ENCODE measurements at regions of chr10 and their contacts with region 1.

Region 1: DNA sequence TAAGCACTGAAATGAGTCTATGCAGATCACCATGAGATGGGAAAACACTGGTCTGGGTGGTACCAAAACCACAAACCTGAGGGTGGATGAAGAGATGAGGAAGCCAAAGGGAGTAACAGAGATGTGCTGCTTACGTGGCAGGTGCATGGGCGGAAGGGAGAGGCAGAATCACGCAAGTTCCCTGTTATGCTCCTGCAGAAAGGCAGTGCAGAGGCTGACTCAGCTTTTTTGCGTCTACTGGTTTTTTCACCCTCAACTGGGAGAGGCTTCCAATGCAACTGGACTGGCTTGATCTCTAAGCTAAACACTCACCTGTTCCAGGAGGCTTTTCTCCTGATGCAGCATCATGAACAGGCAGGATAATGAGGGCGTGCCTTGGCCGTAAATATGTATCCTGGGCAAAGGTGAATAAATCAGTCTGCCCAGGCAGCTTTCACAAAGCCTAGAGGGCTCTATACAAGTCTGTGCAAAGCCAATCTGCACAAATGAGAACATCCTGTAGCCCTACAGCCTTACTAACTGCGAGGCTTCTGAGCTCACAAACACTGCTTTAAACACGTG is 95.4 kb upstream of the AFAP1L2 start:
- DNase-seq: peak; percentile 95
- H3K4me3 Mint-ChIP-seq: peak overlapping the region; percentile 56
- H3K27ac Mint-ChIP-seq: peak overlapping the region; percentile 96
- H3K4me1 Mint-ChIP-seq: peaks cover 87% of the 10 kb centered on the region
- H3K27me3 Mint-ChIP-seq: no peaks in the 10 kb centered on the region

Region 2: GRCh38 chr10:114486938-114487814 is 12.5 kb before region 1 on chr10:
- CTCF ChIA-PET with region 1: interaction called, 5 read pairs
- intact Hi-C with region 1: loop called (anchors 1 kb)
- DNase-seq: peak; percentile 48
- H3K4me3 Mint-ChIP-seq: no peak overlapping the region
- H3K27ac Mint-ChIP-seq: peak overlapping the region; percentile 80
- H3K4me1 Mint-ChIP-seq: peaks cover 60% of the 10 kb centered on the region
- H3K27me3 Mint-ChIP-seq: no peaks in the 10 kb centered on the region

Region 3: DNA sequence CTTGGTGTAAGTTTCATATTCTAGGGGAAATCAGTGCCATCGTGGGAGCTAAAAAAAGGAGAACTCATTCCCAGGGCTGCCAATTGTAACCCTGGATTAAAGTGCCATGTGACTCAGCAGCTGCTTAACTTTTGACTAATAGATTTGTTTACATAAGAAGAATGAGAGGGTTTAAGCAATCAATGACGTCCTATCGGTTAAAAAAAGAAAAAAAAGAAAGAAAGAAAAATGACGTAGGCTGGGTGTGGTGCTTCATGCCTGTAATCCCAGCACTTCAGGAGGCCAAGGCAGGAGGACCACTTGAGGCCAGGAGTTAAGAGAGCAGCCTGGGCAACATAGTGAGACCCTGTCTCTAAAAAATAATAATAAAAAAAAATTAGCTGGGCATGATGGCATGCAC is 20.7 kb after region 1 on chr10:
- CTCF ChIA-PET with region 1: interaction called, 63 read pairs
- intact Hi-C with region 1: loop called (anchors 1 kb)
- DNase-seq: peak; percentile 59
- H3K4me3 Mint-ChIP-seq: peak overlapping the region; percentile 40
- H3K27ac Mint-ChIP-seq: peak overlapping the region; percentile 99
- H3K4me1 Mint-ChIP-seq: peaks cover 89% of the 10 kb centered on the region
- H3K27me3 Mint-ChIP-seq: no peaks in the 10 kb centered on the region

Region 4: DNA sequence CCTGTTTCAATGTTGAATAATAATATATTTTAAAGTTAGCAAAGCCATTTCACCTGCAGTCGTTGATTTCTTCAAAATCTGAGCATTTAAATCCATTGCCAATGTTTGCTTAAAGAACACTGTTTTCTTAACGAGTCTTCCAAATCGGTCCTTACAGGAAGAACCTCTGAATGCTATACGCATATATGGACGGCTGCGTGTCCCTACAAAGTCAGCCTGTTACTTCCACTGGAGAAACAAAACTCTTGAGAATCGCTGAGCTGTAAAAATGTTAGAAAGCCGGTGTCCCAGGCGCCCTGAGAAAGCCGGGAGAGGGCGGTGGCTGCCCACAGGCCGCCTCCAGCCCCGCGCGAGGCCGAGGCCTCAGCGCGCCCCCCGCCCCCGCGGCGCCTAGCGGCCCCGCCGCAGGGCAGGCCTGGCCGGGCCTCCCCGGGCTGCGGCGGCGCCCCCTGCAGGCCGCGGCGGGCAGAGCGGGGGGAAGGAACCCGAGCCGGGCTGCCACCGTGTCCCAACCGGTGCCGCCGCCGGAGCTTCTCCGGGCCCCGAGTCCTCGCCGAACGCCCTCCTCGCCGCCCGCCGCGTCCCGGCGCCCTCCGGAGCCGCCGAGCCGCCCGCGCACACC is 321.7 kb after region 1 on chr10 and contains the start of gene FHIP2A:
- CTCF ChIA-PET with region 1: no interaction called
- intact Hi-C with region 1: loop called (anchors 2 kb)
- DNase-seq: peak; percentile 80
- H3K4me3 Mint-ChIP-seq: peak within 1 kb of the TSS; percentile 89
- H3K27ac Mint-ChIP-seq: peak within 1 kb of the TSS; percentile 83
- H3K4me1 Mint-ChIP-seq: peaks cover 29% of the 10 kb centered on the region
- H3K27me3 Mint-ChIP-seq: no peaks in the 10 kb centered on the region
- total RNA-seq, gene FHIP2A: 8.7 to 11.4 TPM

Region 5: DNA sequence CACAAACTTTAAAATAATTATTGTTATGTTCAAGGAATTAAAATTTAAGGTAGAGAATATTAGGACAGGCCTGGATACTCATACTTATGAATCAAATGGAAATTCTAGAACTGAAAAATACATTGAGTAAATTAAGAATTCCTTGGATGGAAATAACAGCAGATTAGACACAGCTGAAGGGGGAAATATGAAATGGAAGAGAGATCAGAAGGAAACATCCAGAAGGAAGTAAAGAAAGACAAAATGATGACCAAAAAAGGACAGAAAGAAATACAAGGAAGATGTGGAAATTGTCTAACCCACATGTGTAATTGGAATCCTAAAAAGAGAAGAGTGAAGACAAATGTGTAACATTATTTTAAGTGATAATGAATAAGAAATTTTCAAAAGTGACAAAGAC is 722.3 kb after region 1 on chr10:
- CTCF ChIA-PET with region 1: no interaction called
- intact Hi-C with region 1: no loop called
- DNase-seq: no peak
- H3K4me3 Mint-ChIP-seq: no peak overlapping the region
- H3K27ac Mint-ChIP-seq: no peak overlapping the region
- H3K4me1 Mint-ChIP-seq: no peaks in the 10 kb centered on the region
- H3K27me3 Mint-ChIP-seq: no peaks in the 10 kb centered on the region

Measured in activated naive CD4-positive, alpha-beta T cell treated with anti-CD3 and anti-CD28 coated beads for 36 hours (primary cell).